Activated CD4-positive, alpha-beta T cell treated with anti-CD3 and anti-CD28 coated beads for 36 hours (primary cell): ENCODE measurements at regions of chr3 and their contacts with region 1.

Region 1: DNA sequence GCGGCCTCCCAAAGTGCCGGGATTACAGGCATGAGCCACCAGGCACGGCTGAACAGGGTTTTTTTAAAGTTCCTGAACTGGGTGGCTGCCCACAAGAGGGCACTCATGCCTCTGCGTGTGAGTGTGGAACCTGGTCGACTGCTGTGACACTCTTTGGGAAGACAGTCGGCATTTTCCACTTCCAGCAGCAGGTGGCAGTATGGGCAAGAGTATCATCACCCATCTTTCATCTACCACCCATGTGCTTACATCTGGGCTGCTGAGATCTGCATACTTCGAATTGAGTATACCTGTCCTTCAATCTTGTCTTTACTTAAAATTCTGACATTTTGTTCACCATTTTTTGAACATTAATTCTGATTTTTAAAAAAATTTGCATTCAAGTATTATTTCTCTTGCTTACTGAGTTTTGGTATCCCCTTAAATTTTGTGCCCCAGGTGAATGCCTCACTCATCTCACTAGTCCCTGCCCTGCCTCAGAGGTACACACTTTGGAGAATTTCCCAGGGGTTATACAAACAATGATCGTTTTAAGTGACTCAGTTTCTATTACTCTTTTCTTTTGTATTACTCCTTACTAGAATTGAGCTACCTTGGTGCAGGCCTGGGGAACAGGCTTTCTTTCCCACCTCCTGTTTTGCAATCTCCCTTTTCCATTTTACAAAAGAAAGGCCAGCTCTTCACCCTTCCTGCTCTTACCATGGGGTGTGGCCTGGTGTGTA is 11.8 kb downstream of the CLEC3B start:
- DNase-seq: peak; percentile 95
- ATAC-seq: peak; percentile 84
- H3K4me3 Mint-ChIP-seq: no peak overlapping the region
- H3K27ac Mint-ChIP-seq: no peak overlapping the region
- H3K4me1 Mint-ChIP-seq: peaks cover 45% of the 10 kb centered on the region
- H3K27me3 Mint-ChIP-seq: peaks cover 15% of the 10 kb centered on the region

Region 2: DNA sequence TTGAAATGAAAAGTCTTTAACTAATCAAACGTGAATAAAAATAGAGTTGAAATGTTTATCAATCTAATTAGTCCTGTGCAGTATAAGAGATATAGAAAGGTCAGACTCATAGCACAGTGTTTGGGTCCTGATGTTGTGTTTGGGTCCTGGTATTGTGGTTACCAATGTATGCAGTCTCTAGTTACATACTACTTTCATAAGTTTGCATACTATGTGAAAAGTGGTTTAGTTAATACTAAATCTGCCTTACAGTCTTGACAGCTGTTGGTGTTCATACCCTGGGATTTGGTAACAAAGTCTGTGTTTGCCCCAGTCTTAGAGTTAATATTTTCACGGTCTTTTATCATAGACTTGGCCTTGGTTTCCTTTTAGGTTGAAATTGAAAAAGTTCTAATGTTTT is 234.6 kb before region 1 on chr3:
- CTCF ChIA-PET with region 1: no interaction called
- POLR2A ChIA-PET with region 1: no interaction called
- intact Hi-C with region 1: no loop called
- DNase-seq: no peak
- ATAC-seq: no peak
- H3K4me3 Mint-ChIP-seq: no peak overlapping the region
- H3K27ac Mint-ChIP-seq: no peak overlapping the region
- H3K4me1 Mint-ChIP-seq: no peaks in the 10 kb centered on the region
- H3K27me3 Mint-ChIP-seq: no peaks in the 10 kb centered on the region

Region 3: DNA sequence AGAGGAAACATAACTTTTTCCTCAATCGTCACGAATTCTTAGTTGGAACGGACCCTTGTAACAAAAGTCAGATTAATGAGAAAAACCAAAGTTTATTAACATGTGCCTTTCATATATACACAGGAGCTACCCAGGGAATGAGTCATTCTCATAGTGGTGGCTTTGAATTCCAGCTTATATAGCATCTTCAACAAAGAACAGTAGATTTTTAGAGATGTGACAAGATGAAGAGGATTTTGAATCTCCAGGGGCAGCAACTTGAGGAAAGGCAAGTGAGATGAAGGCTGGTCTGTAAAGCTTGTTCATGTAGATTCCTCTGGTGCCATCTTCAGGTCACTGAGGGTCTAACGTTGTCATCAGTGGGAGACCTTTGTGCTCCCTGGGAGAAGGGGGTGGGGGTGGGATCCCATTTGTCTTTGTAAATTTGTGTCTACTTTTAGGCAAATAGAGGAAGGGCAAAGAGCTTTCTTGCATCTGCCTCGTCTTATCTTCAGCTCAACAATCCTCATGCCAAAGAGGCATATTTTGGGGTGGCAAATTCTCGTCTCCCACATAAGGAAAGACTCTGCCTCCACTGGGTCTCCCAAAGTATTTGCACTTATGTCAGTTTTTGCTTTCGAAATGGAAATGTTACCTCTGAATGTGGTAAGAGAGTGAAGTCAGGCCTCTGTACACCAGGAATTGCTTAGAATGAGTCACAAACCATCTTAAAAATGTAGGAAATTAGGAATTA is 17.7 kb after region 1 on chr3:
- CTCF ChIA-PET with region 1: interaction called, 57 read pairs
- POLR2A ChIA-PET with region 1: no interaction called
- intact Hi-C with region 1: loop called in 1 of 2 experiments (anchors 1 kb)
- DNase-seq: peak; percentile 34
- ATAC-seq: peak; percentile 55
- H3K4me3 Mint-ChIP-seq: no peak overlapping the region
- H3K27ac Mint-ChIP-seq: no peak overlapping the region
- H3K4me1 Mint-ChIP-seq: peaks cover 21% of the 10 kb centered on the region
- H3K27me3 Mint-ChIP-seq: no peaks in the 10 kb centered on the region

Region 4: GRCh38 chr3:45224824-45225464 is 187.0 kb after region 1 on chr3:
- CTCF ChIA-PET with region 1: interaction called, 11 read pairs
- POLR2A ChIA-PET with region 1: no interaction called
- intact Hi-C with region 1: loop called in 1 of 2 experiments (anchors 1 kb)
- DNase-seq: peak; percentile 60
- ATAC-seq: no peak
- H3K4me3 Mint-ChIP-seq: peak overlapping the region; percentile 73
- H3K27ac Mint-ChIP-seq: no peak overlapping the region
- H3K4me1 Mint-ChIP-seq: peaks cover 13% of the 10 kb centered on the region
- H3K27me3 Mint-ChIP-seq: peaks cover 62% of the 10 kb centered on the region

Region 5: DNA sequence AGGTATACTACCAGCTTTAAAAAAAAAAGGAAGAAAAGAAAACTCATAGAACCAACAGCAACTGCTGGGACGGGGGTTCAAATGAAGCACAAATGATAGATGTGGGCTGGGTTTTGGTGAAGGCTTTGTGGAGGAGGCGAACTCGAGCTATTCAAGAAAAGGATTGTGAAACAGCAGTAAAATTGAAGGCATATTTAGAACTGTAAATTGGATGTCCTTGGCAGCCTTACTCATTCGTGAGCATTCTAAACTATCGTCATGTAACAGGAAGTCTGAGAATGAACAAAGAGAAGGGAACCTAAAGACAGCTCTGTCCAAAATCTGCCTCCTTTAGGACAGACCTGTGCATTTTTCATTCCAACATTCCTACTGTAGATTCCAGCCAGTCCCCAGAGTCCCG is 448.2 kb after region 1 on chr3:
- CTCF ChIA-PET with region 1: interaction called, 3 read pairs
- POLR2A ChIA-PET with region 1: no interaction called
- intact Hi-C with region 1: loop called in 1 of 2 experiments (anchors 5 kb)
- DNase-seq: no peak
- ATAC-seq: no peak
- H3K4me3 Mint-ChIP-seq: no peak overlapping the region
- H3K27ac Mint-ChIP-seq: no peak overlapping the region
- H3K4me1 Mint-ChIP-seq: peaks cover 9% of the 10 kb centered on the region
- H3K27me3 Mint-ChIP-seq: no peaks in the 10 kb centered on the region

Region 6: GRCh38 chr3:45593708-45594609 is 556.1 kb after region 1 on chr3:
- CTCF ChIA-PET with region 1: interaction called, 3 read pairs
- POLR2A ChIA-PET with region 1: no interaction called
- intact Hi-C with region 1: loop called in 1 of 2 experiments (anchors 2 kb)
- DNase-seq: peak; percentile 82
- ATAC-seq: peak; percentile 81
- H3K4me3 Mint-ChIP-seq: peak overlapping the region; percentile 86
- H3K27ac Mint-ChIP-seq: peak overlapping the region; percentile 82
- H3K4me1 Mint-ChIP-seq: peaks cover 46% of the 10 kb centered on the region
- H3K27me3 Mint-ChIP-seq: no peaks in the 10 kb centered on the region

Region 7: GRCh38 chr3:45929042-45929679 is 891.3 kb after region 1 on chr3:
- CTCF ChIA-PET with region 1: interaction called, 3 read pairs
- POLR2A ChIA-PET with region 1: no interaction called
- intact Hi-C with region 1: loop called in 1 of 2 experiments (anchors 5 kb)
- DNase-seq: peak; percentile 82
- ATAC-seq: peak; percentile 95
- H3K4me3 Mint-ChIP-seq: no peak overlapping the region
- H3K27ac Mint-ChIP-seq: no peak overlapping the region
- H3K4me1 Mint-ChIP-seq: no peaks in the 10 kb centered on the region
- H3K27me3 Mint-ChIP-seq: no peaks in the 10 kb centered on the region